Naive thymus-derived CD4-positive, alpha-beta T cell (primary cell): ENCODE measurements at regions of chr6 and their contacts with region 1.

Region 1: DNA sequence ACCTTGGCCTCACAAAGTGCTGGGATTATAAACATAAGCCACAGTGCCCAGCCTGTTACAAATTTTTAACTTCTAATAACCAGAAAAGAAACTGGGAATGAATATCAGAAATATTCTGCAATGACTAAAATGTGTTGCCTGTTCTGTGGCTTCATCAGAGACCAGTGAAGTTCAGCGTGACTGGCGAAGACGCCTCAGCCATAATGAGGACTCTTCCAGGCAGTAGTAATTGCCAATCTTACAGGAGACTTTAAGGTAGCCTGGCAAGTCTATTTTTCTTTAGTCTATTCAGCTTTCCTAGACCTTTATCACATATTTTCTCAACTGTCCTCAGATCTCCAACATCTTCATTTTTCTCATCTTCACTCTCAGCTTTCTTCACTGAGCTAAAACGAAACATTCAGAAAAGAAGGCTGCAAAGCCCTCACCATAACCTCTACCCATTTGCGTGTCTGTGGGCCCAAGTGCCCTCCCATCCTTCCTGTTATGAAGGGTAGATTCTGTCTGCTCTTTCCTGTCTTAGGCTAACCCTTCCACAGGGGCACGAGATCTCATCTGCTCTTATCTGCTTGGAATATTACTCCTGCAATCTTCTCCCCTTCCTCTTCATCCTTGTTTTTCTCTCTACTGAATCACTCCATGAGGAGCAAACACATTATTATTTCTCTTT is 42.0 kb upstream of the OLIG3 start:
- DNase-seq: peak in 6 of 9 donors; percentile 11 to 68 (median 44)
- ATAC-seq: peak; percentile 91
- H3K4me3 ChIP-seq: no peak overlapping the region
- H3K4me3 Mint-ChIP-seq: no peak overlapping the region
- H3K27ac ChIP-seq: no peak overlapping the region
- H3K27ac Mint-ChIP-seq: no peak overlapping the region
- H3K4me1 ChIP-seq: peaks cover 18 to 24% of the 10 kb centered on the region in 2 donors
- H3K4me1 Mint-ChIP-seq: peaks cover 0 to 7% (median 0%) of the 10 kb centered on the region in 7 donors
- H3K27me3 ChIP-seq: no peaks in the 10 kb centered on the region
- H3K27me3 Mint-ChIP-seq: peaks cover 0 to 16% (median 5%) of the 10 kb centered on the region in 5 donors

Region 2: GRCh38 chr6:137089305-137089704 is 446.9 kb before region 1 on chr6:
- CTCF ChIA-PET with region 1: no interaction called
- POLR2A ChIA-PET with region 1: no interaction called
- intact Hi-C with region 1: no loop called
- DNase-seq: no peak
- ATAC-seq: no peak
- H3K4me3 ChIP-seq: no peak overlapping the region
- H3K4me3 Mint-ChIP-seq: no peak overlapping the region
- H3K27ac ChIP-seq: no peak overlapping the region
- H3K27ac Mint-ChIP-seq: no peak overlapping the region
- H3K4me1 ChIP-seq: no peaks in the 10 kb centered on the region
- H3K4me1 Mint-ChIP-seq: peaks cover 0 to 14% (median 0%) of the 10 kb centered on the region in 7 donors
- H3K27me3 ChIP-seq: no peaks in the 10 kb centered on the region
- H3K27me3 Mint-ChIP-seq: peaks cover 0 to 12% (median 4%) of the 10 kb centered on the region in 5 donors

Region 3: DNA sequence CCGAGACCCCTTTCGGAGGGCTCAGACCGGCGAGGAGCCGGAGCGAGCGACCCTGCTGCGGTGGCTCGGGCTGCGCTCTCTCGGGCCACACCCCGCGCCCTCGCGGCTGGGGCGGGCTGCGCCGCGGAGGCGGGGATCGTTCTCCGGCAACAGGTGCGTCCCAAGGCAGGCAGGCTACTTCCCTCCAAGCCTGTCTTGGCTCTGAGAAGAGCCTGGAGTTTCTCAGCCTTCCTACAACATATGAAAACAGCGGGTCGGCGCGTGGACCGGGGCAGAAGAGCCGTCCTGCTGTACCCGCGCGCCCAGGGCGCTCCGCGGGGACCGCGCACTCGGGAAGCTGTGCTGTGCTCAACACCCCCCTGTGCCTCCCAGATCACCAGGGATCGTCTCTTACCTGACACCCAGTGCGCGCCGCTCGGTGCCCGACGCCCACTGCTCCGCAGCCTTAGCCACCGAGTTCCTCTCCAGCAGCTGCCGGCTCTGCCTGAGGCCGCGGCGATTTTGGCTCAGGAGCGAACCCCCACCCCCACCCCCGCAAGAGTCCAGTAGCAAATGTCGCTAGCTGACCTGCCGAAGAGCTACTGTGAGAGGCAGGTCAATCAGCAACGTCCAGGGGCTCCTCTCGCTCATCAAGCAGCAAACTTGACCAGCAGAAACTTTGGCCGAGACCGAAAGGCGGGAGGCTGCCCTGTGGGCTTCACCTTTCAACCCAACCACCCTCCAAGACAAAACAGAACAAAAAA is 38.3 kb before region 1 on chr6:
- CTCF ChIA-PET with region 1: no interaction called
- POLR2A ChIA-PET with region 1: interaction called, 5 read pairs
- intact Hi-C with region 1: loop called in 1 of 2 experiments (anchors 2 kb)
- DNase-seq: peak in 4 of 9 donors; percentile 17 to 32 (median 28)
- ATAC-seq: peak; percentile 52
- H3K4me3 ChIP-seq: peak overlapping the region; percentile 34
- H3K4me3 Mint-ChIP-seq: peak overlapping the region; percentile 28 to 81 (median 56)
- H3K27ac ChIP-seq: no peak overlapping the region
- H3K27ac Mint-ChIP-seq: peak overlapping the region in 1 of 9 donors; percentile 13
- H3K4me1 ChIP-seq: peaks cover 35 to 36% of the 10 kb centered on the region in 2 donors
- H3K4me1 Mint-ChIP-seq: peaks cover 22 to 52% (median 39%) of the 10 kb centered on the region in 7 donors
- H3K27me3 ChIP-seq: peaks cover 47 to 55% of the 10 kb centered on the region in 2 donors
- H3K27me3 Mint-ChIP-seq: peaks cover 45 to 91% (median 76%) of the 10 kb centered on the region in 5 donors

Region 4: DNA sequence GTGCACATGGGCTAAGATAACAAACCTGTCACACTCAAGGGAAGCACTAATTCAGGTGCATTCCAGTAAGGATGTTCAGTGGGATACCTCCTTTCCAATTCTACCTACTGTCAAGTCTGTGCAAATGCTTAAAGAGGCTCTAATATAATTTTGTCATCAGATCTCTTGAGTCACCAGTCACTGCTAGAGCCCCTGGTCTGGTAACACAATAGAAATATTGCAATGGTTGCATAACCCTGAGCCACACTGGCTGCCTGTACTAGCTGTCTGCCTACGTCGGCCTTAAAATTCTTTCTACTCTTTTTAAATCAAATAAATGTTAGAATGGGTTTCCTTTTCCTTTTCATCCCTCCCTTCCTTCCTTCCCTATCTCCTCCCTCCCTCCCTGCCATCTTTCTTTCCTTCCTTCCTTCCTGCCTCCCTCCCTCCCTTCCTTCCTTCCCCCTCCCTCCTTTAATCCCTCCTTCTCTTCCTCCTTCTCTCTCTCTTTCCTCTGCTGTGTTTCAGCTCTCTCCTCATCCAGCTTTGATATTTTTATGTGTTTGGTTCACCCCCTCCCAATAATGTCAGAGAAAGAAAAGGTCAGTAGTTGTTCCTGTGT is 13.9 kb before region 1 on chr6:
- CTCF ChIA-PET with region 1: interaction called, 3 read pairs
- POLR2A ChIA-PET with region 1: interaction called, 6 read pairs
- intact Hi-C with region 1: loop called in 1 of 2 experiments (anchors 2 kb)
- DNase-seq: no peak
- ATAC-seq: no peak
- H3K4me3 ChIP-seq: no peak overlapping the region
- H3K4me3 Mint-ChIP-seq: no peak overlapping the region
- H3K27ac ChIP-seq: no peak overlapping the region
- H3K27ac Mint-ChIP-seq: no peak overlapping the region
- H3K4me1 ChIP-seq: no peaks in the 10 kb centered on the region
- H3K4me1 Mint-ChIP-seq: peaks cover 0 to 8% (median 2%) of the 10 kb centered on the region in 7 donors
- H3K27me3 ChIP-seq: peaks cover 4 to 7% of the 10 kb centered on the region in 2 donors
- H3K27me3 Mint-ChIP-seq: peaks cover 16 to 52% (median 33%) of the 10 kb centered on the region in 5 donors

Region 5: GRCh38 chr6:137560184-137560563 is 23.9 kb after region 1 on chr6:
- CTCF ChIA-PET with region 1: interaction called, 4 read pairs
- POLR2A ChIA-PET with region 1: interaction called, 43 read pairs
- intact Hi-C with region 1: loop called in 1 of 2 experiments (anchors 1 kb)
- DNase-seq: no peak
- ATAC-seq: no peak
- H3K4me3 ChIP-seq: peak overlapping the region; percentile 25
- H3K4me3 Mint-ChIP-seq: peak overlapping the region; percentile 57 to 82 (median 78)
- H3K27ac ChIP-seq: no peak overlapping the region
- H3K27ac Mint-ChIP-seq: peak overlapping the region; percentile 39 to 93 (median 80)
- H3K4me1 ChIP-seq: peaks cover 26 to 29% of the 10 kb centered on the region in 2 donors
- H3K4me1 Mint-ChIP-seq: peaks cover 24 to 55% (median 40%) of the 10 kb centered on the region in 7 donors
- H3K27me3 ChIP-seq: no peaks in the 10 kb centered on the region
- H3K27me3 Mint-ChIP-seq: peaks cover 0 to 24% (median 0%) of the 10 kb centered on the region in 5 donors

Region 6: GRCh38 chr6:137625796-137626195 is 89.6 kb after region 1 on chr6:
- CTCF ChIA-PET with region 1: no interaction called
- POLR2A ChIA-PET with region 1: no interaction called
- intact Hi-C with region 1: no loop called
- DNase-seq: no peak
- ATAC-seq: no peak
- H3K4me3 ChIP-seq: no peak overlapping the region
- H3K4me3 Mint-ChIP-seq: no peak overlapping the region
- H3K27ac ChIP-seq: no peak overlapping the region
- H3K27ac Mint-ChIP-seq: no peak overlapping the region
- H3K4me1 ChIP-seq: no peaks in the 10 kb centered on the region
- H3K4me1 Mint-ChIP-seq: peaks cover 0 to under 1% (median 0%) of the 10 kb centered on the region in 7 donors
- H3K27me3 ChIP-seq: no peaks in the 10 kb centered on the region
- H3K27me3 Mint-ChIP-seq: peaks cover 6 to 35% (median 20%) of the 10 kb centered on the region in 5 donors

Region 7: DNA sequence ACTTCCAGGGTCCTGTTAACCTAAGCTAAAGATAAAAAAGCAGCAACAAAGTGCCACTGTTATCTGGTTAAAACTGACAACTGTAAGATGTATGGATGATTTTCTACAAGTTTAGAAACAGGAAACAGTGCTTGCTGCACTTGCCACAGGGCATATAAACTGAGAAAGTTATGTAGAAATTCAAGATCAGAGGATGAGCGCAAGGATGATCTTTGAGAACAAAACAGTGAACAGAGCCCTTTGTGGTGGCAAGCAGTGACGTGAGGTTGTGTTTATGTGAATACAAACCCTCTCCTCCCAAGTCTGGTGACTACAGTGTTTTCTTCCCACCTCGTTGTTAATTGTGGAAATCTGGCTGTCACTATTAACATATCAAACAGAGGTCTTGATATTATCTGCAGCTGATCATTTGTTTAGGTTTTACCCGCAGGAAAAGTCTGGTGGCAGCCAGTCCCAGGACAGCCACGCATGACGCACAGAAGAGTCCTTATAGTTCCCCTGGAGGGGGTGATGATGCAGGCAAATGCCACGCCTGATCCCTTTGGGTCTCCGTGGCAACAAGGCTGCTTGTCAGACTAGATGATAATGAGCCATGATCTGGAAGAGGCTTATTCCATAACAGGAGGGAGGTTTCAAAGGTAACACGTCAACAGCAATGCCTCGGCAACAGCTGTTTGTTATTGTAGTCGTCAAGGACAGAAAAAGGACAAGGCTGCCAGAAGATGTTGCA is 287.8 kb after region 1 on chr6:
- CTCF ChIA-PET with region 1: no interaction called
- POLR2A ChIA-PET with region 1: no interaction called
- intact Hi-C with region 1: no loop called
- DNase-seq: peak; percentile 59 to 100 (median 95)
- ATAC-seq: peak; percentile 87
- H3K4me3 ChIP-seq: peak overlapping the region; percentile 33
- H3K4me3 Mint-ChIP-seq: peak overlapping the region; percentile 72 to 86 (median 79)
- H3K27ac ChIP-seq: peak overlapping the region; percentile 99
- H3K27ac Mint-ChIP-seq: peak overlapping the region; percentile 96 to 100 (median 100)
- H3K4me1 ChIP-seq: peaks cover 43 to 76% of the 10 kb centered on the region in 2 donors
- H3K4me1 Mint-ChIP-seq: peaks cover 48 to 98% (median 93%) of the 10 kb centered on the region in 7 donors
- H3K27me3 ChIP-seq: no peaks in the 10 kb centered on the region
- H3K27me3 Mint-ChIP-seq: no peaks in the 10 kb centered on the region

Region 8: DNA sequence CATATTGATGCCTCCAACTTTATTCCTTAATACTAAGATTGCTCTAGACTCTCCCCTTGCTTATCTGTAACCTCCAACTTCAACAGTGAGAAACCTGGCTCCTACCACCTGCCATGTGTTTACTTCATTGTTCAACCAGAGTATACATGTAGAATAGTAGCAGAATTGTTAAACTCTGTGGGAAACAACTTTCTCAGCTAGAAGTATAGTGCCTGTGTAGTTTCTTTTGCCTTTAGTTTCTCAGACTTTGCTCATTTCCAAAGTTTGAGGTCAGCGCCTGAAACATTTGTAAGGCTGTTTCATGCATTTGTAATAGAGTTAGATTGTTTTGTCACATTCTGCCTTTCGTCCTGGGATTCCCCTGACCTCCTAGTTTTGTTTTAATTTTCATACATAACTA is 1563.7 kb after region 1 on chr6:
- CTCF ChIA-PET with region 1: no interaction called
- POLR2A ChIA-PET with region 1: no interaction called
- intact Hi-C with region 1: no loop called
- DNase-seq: no peak
- ATAC-seq: no peak
- H3K4me3 ChIP-seq: no peak overlapping the region
- H3K4me3 Mint-ChIP-seq: no peak overlapping the region
- H3K27ac ChIP-seq: no peak overlapping the region
- H3K27ac Mint-ChIP-seq: no peak overlapping the region
- H3K4me1 ChIP-seq: no peaks in the 10 kb centered on the region
- H3K4me1 Mint-ChIP-seq: peaks cover 0 to 17% (median 11%) of the 10 kb centered on the region in 7 donors
- H3K27me3 ChIP-seq: no peaks in the 10 kb centered on the region
- H3K27me3 Mint-ChIP-seq: peaks cover 0 to 3% (median 0%) of the 10 kb centered on the region in 5 donors